Sigmoid colon (tissue), 7 donors: ENCODE measurements at regions of chr11 and their contacts with region 1.

Region 1: DNA sequence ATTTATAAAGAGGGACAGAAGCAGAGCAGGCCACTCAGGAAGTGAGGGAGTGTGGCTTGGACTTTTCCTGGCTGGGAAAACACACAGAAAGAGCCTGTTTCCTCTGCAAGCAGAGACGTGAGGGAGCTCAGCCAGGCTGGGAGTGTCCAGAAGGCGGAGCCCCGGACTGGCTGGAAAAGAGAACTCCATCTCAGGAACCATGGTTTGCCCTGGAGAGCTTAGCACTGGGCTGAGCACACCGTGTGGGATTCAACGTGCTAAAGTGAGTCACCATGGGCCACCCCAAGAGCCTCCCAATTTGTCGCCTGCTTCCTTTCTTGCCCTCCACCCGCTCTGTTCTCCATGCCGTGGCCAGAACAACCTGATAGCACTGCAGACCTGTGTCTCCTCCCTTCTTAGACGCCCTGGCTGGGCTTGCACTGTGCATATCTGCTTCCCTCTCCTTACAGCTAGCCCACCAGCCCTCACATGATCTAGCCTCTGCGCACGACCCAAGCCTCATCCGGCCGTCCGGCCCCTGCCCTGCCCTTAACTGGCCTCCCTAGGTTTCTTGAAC is 51.8 kb downstream of the GALNT18 start:
- DNase-seq: peak; percentile 81
- H3K4me3 ChIP-seq: no peak overlapping the region
- H3K27ac ChIP-seq: peak overlapping the region; percentile 58 to 88 (median 71)
- H3K4me1 ChIP-seq: peaks cover 0 to 90% (median 63%) of the 10 kb centered on the region in 4 donors
- H3K27me3 ChIP-seq: no peaks in the 10 kb centered on the region
- CTCF ChIP-seq: no peak
- EP300 ChIP-seq: no peak
- POLR2A ChIP-seq: no peak

Region 2: GRCh38 chr11:11524436-11525061 is 45.5 kb before region 1 on chr11:
- intact Hi-C with region 1: loop called (anchors 1 kb)
- DNase-seq: no peak
- H3K4me3 ChIP-seq: no peak overlapping the region
- H3K27ac ChIP-seq: peak overlapping the region in 2 of 4 donors; percentile 15 to 30
- H3K4me1 ChIP-seq: peaks cover 0 to 50% (median 21%) of the 10 kb centered on the region in 4 donors
- H3K27me3 ChIP-seq: no peaks in the 10 kb centered on the region
- CTCF ChIP-seq: no peak
- EP300 ChIP-seq: no peak
- POLR2A ChIP-seq: no peak

Region 3: DNA sequence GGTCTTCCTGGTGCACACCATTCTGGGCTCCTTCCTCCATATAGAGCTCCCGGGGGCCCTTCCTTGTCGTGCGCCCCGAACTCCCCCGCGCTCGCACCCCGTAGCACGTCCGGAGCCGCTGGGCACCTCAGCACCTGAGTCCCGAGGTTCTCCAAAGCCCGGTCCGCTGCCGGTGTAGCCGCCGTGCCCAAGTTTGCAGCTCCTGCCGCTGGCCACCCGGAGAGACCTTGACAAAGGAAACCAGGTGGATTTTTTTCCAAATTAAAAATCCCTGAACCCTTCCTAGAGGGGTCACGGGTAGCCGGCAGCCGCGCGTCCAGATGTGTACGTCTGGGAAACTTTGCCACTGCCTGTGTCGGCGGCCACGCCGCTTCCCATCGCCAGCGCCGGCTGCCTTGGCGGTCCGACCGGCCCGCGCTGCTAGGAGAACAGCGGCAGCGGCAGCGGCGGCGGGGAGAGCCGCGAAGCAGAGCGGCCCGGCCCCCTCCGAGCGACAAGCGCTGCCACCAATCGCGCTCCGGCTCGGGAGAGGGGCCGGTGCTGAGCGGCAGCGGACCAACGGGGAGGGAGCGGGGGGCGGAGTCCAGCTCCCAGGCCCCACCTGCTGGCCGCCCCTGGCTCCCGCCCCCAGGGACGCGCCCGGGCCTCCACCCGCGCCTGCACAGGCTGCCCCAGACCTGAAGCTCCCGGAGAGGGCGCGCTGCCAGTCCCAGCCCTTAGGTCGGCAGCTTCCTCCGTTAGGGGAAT is 51.7 kb after region 1 on chr11 and contains the start of gene GALNT18:
- intact Hi-C with region 1: loop called (anchors 5 kb)
- DNase-seq: peak; percentile 97
- H3K4me3 ChIP-seq: peak within 1 kb of the TSS; percentile 64 to 85 (median 77)
- H3K27ac ChIP-seq: peak within 1 kb of the TSS; percentile 85 to 93 (median 88)
- H3K4me1 ChIP-seq: peaks cover 0 to 54% (median 49%) of the 10 kb centered on the region in 4 donors
- H3K27me3 ChIP-seq: no peaks in the 10 kb centered on the region
- CTCF ChIP-seq: peak in 2 of 4 experiments; percentile 50 to 54
- EP300 ChIP-seq: no peak
- POLR2A ChIP-seq: peak in 1 of 2 donors; percentile 73
- total RNA-seq, gene GALNT18: 34.9 to 48.6 (median 39.8) TPM

Region 4: DNA sequence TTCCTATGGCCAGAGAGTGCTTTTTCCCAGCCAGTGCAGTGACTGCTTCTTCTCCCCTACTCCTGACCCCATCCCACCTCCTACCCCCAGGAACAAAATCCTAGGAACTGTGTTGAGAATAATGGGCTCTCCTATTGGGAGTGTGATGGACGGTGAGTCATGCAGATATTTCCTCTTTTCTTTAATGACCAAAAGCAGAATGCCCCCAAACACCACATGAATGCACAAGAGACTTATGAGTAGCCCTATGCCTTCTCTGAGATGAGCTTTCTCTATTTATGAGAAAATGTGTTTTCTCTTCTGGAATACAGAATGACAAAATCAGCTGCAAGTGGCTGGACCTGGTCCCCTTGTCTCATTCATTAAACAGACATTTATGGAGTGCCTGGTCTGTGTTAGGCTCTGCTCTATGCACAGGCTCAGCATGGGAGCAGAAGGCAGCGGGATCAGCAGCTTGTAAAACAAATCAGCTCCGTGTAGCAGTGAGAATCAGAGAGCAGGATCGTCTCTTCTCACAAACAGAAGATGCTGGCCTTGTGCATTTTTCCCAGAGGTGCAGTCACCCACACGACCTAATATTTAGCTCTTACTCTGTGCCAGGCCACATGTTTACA is 99.3 kb after region 1 on chr11:
- intact Hi-C with region 1: loop called (anchors 5 kb)
- DNase-seq: peak; percentile 83
- H3K4me3 ChIP-seq: no peak overlapping the region
- H3K27ac ChIP-seq: peak overlapping the region in 3 of 4 donors; percentile 68 to 75 (median 68)
- H3K4me1 ChIP-seq: peaks cover 0 to 48% (median 34%) of the 10 kb centered on the region in 4 donors
- H3K27me3 ChIP-seq: no peaks in the 10 kb centered on the region
- CTCF ChIP-seq: no peak
- EP300 ChIP-seq: peak in 1 of 4 donors; percentile 73
- POLR2A ChIP-seq: no peak

Region 5: DNA sequence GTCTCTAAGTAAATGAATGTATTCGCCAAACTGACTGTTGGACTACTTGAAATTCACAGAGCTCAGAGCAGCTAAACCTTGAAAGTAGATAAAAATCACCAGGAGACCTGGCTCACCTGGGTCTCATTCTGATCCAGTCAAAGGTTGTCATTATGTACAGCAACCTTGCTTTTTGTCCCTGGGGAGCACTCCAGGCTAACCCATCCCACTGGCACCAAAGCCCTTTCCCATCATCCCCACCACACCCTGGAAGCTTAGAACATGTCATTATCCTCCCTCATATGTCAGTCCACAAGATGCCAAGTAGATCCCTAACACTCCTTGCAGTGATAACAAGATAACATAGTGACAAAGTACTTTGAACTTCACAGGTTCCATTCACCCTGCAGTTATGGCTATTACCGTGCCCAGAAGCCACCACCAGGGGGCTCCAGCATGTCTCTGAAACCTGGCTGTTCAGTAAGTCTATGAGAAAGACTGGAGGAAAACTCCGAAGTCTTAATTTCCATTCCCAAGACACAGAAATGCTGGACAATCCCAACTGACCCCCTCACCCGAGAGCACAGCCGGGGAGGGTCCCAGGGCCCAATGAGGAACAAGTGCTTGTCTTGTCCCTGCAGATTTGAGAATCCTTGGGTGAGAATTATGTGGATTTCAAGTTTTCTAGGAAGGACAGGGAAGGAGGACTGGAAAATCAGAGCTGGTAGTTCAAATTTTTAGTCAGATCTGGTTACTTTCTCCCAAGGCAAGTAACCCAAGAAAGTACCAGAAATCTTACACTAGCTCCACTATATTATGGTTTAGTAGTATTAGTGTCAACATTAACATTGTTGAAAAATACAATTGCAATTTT is 228.8 kb after region 1 on chr11:
- intact Hi-C with region 1: no loop called
- DNase-seq: peak; percentile 92
- H3K4me3 ChIP-seq: no peak overlapping the region
- H3K27ac ChIP-seq: no peak overlapping the region
- H3K4me1 ChIP-seq: no peaks in the 10 kb centered on the region
- H3K27me3 ChIP-seq: no peaks in the 10 kb centered on the region
- CTCF ChIP-seq: peak; percentile 61 to 89 (median 84)
- EP300 ChIP-seq: no peak
- POLR2A ChIP-seq: no peak